ENCODE measurements at regions of chr11 and their contacts with region 1.

Region 1: DNA sequence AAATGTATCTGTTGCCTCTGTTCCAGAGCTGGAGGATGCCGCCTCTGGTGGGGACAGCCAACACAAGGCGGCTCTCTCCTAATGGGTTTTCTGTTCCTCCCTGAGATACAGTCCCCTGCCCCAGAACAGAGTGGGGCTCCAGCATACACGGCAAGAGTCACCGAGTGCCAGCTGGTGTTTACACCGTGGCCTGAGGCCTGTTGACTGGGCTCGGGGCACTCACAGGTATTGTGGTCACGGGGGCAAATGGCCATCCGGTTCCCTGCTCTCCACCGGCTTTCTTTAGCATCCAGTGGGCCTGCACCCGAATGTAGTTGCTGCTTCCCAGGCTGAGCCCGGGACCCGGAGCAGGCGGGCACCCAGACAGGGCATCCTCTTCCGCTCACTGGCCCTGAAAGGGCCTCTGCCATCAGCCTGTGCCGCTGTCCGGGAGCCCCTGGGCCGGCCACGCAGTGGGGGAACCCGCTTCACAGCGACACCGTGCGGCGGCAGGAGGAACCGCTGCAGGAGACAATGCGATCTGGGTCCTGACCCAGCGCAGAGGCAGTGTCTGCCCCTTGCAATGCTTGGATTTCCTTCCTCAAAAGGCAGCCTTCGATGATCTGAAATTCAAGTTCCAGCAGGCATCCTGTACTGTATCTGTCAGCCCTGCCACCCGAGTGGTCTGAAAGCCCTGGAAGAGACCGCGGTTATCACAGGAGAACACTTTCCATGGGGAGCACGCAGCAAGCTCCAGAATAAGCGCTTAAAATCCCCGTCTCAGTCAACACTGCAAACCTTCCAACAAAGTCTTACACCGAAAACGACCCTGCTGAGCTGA is 859 bp upstream of the KRTAP5-5 start:
- DNase-seq: no peak
- ATAC-seq: peak; percentile 97
- H3K4me3 ChIP-seq: no peak overlapping the region
- H3K27ac ChIP-seq: no peak overlapping the region
- H3K4me1 ChIP-seq: no peaks in the 10 kb centered on the region
- H3K27me3 ChIP-seq: peaks cover 0 to 4% of the 10 kb centered on the region in 2 experiments; a peak in 3 of 4 replicates
- CTCF ChIP-seq: peak; percentile 78 to 93 (median 83)
- EP300 ChIP-seq: no peak
- POLR2A ChIP-seq: no peak
- RAD21 ChIP-seq: peak; percentile 65

Region 2: GRCh38 chr11:1515082-1516060 is 113.3 kb before region 1 on chr11:
- CTCF ChIA-PET with region 1: no interaction called
- POLR2A ChIA-PET with region 1: no interaction called
- RAD21 ChIA-PET with region 1: no interaction called
- SMC1A ChIA-PET with region 1: no interaction called
- in situ Hi-C with region 1: no loop called
- intact Hi-C with region 1: no loop called
- DNase-seq: no peak
- ATAC-seq: peak; percentile 95
- H3K4me3 ChIP-seq: no peak overlapping the region
- H3K27ac ChIP-seq: no peak overlapping the region
- H3K4me1 ChIP-seq: peaks cover under 1% of the 10 kb centered on the region; the same call in 1 of the 2 replicates
- H3K27me3 ChIP-seq: no peaks in the 10 kb centered on the region
- CTCF ChIP-seq: peak; percentile 73 to 86 (median 84)
- EP300 ChIP-seq: no peak
- POLR2A ChIP-seq: no peak
- RAD21 ChIP-seq: peak; percentile 70

Region 3: GRCh38 chr11:1598816-1599215 is 29.9 kb before region 1 on chr11:
- CTCF ChIA-PET with region 1: interaction called, 12 read pairs
- POLR2A ChIA-PET with region 1: no interaction called
- RAD21 ChIA-PET with region 1: no interaction called
- SMC1A ChIA-PET with region 1: interaction called, 4 read pairs
- in situ Hi-C with region 1: no loop called
- intact Hi-C with region 1: loop called (anchors 1 kb)
- DNase-seq: no peak
- ATAC-seq: no peak
- H3K4me3 ChIP-seq: no peak overlapping the region
- H3K27ac ChIP-seq: no peak overlapping the region
- H3K4me1 ChIP-seq: no peaks in the 10 kb centered on the region
- H3K27me3 ChIP-seq: no peaks in the 10 kb centered on the region; a peak in 2 of 4 replicates
- CTCF ChIP-seq: no peak
- EP300 ChIP-seq: no peak
- POLR2A ChIP-seq: no peak
- RAD21 ChIP-seq: no peak

Region 4: DNA sequence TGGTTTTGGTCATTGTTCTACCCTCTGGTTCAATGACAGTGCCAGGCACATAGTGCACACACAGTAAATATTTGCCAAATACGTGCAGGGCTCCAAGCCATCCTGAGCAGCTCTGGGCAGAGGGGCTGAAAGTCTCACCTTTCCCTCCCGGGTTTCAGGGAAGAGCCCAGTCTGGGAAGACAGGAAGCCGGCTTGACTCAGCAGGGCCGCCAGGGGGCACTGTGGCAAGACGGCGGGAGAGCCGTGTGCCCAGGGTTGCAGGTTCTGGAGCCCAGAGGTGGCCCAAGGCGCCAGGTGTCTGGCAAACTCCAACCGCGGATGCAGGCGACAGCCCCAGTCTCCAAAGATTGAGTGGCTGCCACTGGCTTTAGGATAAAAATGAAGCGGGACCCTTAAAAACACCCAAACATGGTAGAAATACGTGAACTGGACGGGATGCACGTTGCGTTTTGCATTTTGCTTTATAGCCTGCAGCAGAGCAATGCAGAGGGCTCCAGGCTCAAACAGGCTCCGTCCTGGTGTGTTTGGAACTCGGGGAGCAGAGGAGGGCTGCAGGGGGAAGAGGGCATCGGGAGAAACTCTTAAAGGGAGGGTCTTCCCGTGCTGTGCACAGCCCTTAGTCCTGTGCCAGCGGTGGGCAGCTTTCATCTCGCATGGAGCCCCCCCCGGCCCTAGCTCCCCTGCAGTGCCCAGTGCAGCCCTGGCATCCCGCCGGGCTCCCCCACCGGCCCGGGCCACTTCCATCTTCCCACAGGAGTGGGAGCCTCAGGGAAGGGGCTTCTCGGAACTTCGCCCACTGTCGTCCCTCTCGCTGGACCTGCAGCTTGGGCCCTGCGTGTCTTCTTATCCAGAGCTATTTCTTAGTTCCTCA is 11.6 kb after region 1 on chr11:
- CTCF ChIA-PET with region 1: interaction called, 12 read pairs
- POLR2A ChIA-PET with region 1: no interaction called
- RAD21 ChIA-PET with region 1: no interaction called
- SMC1A ChIA-PET with region 1: no interaction called
- in situ Hi-C with region 1: no loop called
- intact Hi-C with region 1: no loop called
- DNase-seq: no peak
- ATAC-seq: peak; percentile 71
- H3K4me3 ChIP-seq: no peak overlapping the region
- H3K27ac ChIP-seq: no peak overlapping the region
- H3K4me1 ChIP-seq: no peaks in the 10 kb centered on the region
- H3K27me3 ChIP-seq: no peaks in the 10 kb centered on the region; a peak in 2 of 4 replicates
- CTCF ChIP-seq: peak; percentile 54 to 81 (median 67)
- EP300 ChIP-seq: no peak
- POLR2A ChIP-seq: no peak
- RAD21 ChIP-seq: no peak

Measured in GM12878 (cell line).